Vagina (tissue), 2 donors: ENCODE measurements at regions of chr1 and their contacts with region 1.

Region 1: DNA sequence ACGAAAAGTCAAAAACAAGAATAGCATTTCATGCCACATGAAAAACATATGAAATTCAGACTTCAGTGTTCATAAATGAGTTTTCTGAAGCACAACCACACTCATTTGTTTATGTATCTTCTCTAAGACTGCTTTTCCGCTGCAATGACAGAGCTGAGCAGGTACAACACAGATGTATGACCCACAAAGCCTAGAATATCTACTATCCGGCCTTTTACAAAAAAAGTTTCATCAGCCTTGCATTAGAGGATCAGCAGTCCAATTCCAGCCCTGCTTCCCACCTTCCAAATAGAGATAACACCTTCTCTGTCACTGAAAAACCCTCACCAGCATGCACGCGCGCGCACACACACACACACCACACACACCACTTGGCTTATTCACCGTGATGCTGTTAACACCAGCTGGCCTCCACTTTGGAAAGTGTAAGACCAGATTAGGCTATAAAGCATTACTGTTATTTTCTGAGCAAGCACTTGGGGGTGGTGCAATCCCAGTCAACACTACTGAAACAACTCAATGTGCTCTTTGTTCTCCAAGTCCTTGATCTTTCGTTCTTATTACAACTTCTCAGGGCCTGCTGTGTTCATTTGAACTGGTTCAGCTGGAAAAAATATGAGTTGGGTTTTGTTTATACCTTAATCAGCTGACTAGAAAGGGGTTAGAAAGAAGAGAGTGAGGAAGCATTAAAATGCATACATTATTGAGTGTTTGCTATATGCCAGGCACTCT is 90.0 kb downstream of the GLUL start:
- DNase-seq: no peak
- H3K4me3 ChIP-seq: no peak overlapping the region
- H3K27ac ChIP-seq: no peak overlapping the region
- H3K4me1 ChIP-seq: peaks cover 30% of the 10 kb centered on the region
- H3K27me3 ChIP-seq: no peaks in the 10 kb centered on the region
- CTCF ChIP-seq: no peak
- POLR2A ChIP-seq: no peak

Region 2: GRCh38 chr1:182143154-182143657 is 158.4 kb before region 1 on chr1:
- intact Hi-C with region 1: loop called (anchors 10 kb)
- DNase-seq: no peak
- H3K4me3 ChIP-seq: no peak overlapping the region
- H3K27ac ChIP-seq: peak overlapping the region; percentile 96
- H3K4me1 ChIP-seq: peaks cover 66% of the 10 kb centered on the region
- H3K27me3 ChIP-seq: no peaks in the 10 kb centered on the region
- CTCF ChIP-seq: peak; percentile 93 to 98 (median 96)
- POLR2A ChIP-seq: no peak

Region 3: DNA sequence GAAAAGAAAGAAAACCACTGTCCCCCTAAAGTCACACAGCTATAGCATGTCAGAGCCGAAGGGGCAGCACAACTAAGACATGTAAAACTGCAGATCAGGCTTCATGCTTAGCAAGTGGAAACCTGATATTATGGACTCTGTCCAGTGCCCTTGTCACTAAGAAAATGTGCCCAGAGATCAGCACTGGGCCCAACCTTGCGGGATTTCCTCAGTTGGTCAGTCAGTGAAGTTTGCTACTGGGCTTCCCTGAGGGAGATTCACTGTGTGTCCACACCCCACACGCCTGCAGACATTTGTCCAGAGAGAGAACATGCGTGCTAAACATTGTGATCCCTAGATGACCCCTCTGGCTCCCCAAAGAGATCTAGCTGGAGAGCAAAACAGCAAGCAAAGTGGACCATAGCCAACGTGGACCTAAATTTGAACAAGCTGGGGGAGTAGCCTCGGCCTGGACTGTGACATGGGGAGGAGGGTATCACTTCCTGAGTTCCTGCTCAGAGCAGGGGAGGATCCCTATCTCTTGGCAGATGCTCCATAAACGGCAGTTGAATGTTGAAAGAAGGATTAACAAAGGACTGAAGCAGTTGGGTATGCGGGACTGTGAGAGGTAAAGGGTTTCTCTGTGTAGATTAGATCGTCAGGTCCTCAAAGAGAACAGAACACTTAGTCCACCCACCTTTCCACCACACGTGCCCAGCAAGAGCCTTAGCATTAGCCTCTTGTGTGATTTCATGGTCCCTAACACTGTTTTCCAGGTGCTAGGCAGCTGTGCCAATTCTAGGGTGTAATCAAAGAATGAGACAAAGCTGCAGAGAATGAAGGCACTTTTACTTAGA is 36.3 kb after region 1 on chr1:
- intact Hi-C with region 1: no loop called
- DNase-seq: no peak
- H3K4me3 ChIP-seq: no peak overlapping the region
- H3K27ac ChIP-seq: peak overlapping the region; percentile 77
- H3K4me1 ChIP-seq: peaks cover 14% of the 10 kb centered on the region
- H3K27me3 ChIP-seq: no peaks in the 10 kb centered on the region
- CTCF ChIP-seq: no peak
- POLR2A ChIP-seq: no peak